ENCODE measurements at regions of chr1 and their contacts with region 1.

Region 1: DNA sequence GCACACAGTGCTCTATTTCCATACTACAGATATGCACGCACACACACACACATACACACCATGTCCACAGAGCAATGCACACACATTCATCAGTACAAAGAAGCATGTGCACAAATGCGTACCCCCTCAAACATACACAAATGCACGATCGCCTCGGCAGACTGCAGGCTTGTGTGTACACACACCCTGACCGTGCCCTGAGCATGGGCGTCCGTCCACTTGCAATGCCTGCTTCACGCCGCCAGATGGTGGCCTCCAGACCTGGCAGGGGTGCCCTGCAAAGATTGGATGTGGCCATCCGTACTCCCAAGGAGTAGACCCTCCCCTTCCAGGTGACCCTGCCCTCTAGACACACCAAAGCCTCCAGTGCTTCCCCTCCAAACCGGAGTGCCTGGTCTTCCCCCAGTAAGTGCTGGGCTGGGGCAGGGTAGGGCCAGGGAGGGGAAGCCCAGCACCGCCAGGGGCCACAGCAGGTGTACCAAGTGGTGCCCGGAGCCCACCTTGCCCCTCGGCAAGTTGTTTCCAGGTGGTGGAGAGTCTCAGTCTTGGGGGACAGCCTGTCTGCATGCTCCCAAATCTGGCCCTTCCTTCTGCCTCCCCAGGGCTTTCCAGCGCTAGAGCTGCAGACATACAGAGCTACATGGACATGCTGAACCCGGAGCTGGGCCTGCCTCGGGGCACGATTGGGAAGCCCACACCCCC is 20.6 kb downstream of the ESPN start:
- DNase-seq: no peak
- H3K4me3 ChIP-seq: no peak overlapping the region
- H3K27ac ChIP-seq: no peak overlapping the region
- H3K4me1 ChIP-seq: no peaks in the 10 kb centered on the region
- H3K27me3 ChIP-seq: peaks cover 23% of the 10 kb centered on the region
- CTCF ChIP-seq: peak; percentile 16 to 56

Region 2: GRCh38 chr1:5713101-5714010 is 731.9 kb before region 1 on chr1:
- CTCF ChIA-PET with region 1: no interaction called
- dilution Hi-C with region 1: no loop called
- in situ Hi-C with region 1: no loop called
- intact Hi-C with region 1: no loop called
- DNase-seq: no peak
- H3K4me3 ChIP-seq: no peak overlapping the region
- H3K27ac ChIP-seq: no peak overlapping the region
- H3K4me1 ChIP-seq: no peaks in the 10 kb centered on the region
- H3K27me3 ChIP-seq: no peaks in the 10 kb centered on the region
- CTCF ChIP-seq: no peak

Region 3: DNA sequence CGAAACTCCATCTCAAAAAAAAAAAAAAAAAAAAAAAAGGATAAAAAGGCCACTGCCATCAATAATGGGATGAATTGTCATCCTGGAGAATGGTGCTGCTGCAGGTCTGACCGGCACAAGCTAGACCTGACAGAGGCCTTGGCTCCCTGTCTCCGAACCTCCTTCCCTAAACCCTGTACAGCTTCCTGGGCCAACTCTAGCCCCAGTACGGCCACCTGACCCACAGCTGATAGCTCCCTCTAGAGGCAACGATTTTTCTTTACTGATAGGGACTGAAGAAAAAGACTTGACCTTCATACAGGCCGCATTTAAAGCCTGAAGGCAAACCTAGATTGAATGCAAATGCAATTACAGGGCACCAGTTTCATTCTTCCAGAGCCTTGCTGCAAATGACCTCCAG is 78.4 kb after region 1 on chr1:
- CTCF ChIA-PET with region 1: no interaction called
- dilution Hi-C with region 1: no loop called
- in situ Hi-C with region 1: no loop called
- intact Hi-C with region 1: loop called (anchors 5 kb)
- DNase-seq: peak; percentile 36
- H3K4me3 ChIP-seq: no peak overlapping the region
- H3K27ac ChIP-seq: no peak overlapping the region
- H3K4me1 ChIP-seq: peaks cover 30% of the 10 kb centered on the region
- H3K27me3 ChIP-seq: no peaks in the 10 kb centered on the region
- CTCF ChIP-seq: peak; percentile 59 to 72

Region 4: DNA sequence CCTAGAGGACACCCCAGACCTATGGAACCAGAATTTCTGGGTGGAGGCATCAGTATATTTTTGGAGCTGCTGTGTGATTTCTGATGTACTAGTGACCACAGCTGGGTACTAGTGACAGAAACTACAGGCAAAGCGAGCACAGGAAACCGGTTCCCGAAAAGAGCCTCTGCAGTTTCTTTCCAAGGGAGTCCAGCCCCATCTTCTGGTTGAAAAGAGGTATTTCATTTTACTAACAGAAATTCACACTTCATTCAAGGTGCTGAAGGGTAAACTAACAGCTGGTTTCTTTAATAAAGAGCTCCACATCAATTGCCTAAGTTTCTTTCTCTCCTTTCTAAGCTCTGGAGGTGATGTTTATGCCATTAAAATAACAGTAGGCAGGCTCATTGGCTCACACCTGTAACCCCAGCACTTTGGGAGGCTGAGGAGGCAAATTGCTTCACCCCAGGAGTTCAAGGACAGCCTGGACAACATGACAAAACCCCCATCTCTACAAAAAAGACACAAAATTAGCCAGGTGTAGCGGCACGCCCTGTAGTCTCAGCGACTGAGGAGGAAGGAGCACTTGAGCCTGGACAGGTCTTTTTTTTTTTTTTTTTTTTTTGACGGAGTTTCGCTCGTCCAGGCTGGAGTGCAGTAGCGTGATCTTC is 201.4 kb after region 1 on chr1:
- CTCF ChIA-PET with region 1: no interaction called
- dilution Hi-C with region 1: no loop called
- in situ Hi-C with region 1: no loop called
- intact Hi-C with region 1: loop called (anchors 2 kb)
- DNase-seq: peak; percentile 24
- H3K4me3 ChIP-seq: no peak overlapping the region
- H3K27ac ChIP-seq: no peak overlapping the region
- H3K4me1 ChIP-seq: no peaks in the 10 kb centered on the region
- H3K27me3 ChIP-seq: no peaks in the 10 kb centered on the region
- CTCF ChIP-seq: peak; percentile 50 to 65

Measured in mammary epithelial cell (primary cell).